ENCODE measurements at regions of chr3 and their contacts with region 1.

Region 1: DNA sequence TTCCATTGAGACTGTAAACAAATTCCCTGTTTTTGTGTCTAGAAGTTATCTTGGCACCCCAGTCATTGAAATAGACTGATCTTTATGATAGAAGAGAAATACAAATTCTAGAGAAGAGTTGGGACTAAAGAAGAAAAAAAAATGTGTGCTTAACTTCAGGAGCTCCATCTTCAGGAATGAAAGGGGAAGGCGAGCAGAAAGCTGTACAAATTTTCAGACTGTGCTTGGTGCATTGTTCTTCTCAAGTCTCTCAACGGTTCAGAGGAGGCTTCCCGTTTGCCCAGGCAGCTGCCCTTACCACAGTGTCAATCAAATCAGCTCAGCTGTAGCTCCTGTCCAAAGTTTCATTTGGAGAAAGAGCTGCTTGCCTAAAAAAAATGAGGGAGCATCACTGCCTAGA is 41.7 kb downstream of the OXSM start:
- DNase-seq: peak; percentile 29
- H3K4me3 Mint-ChIP-seq: no peak overlapping the region
- H3K27ac Mint-ChIP-seq: no peak overlapping the region
- H3K4me1 Mint-ChIP-seq: no peaks in the 10 kb centered on the region
- H3K27me3 Mint-ChIP-seq: no peaks in the 10 kb centered on the region
- CTCF ChIP-seq: no peak

Region 2: DNA sequence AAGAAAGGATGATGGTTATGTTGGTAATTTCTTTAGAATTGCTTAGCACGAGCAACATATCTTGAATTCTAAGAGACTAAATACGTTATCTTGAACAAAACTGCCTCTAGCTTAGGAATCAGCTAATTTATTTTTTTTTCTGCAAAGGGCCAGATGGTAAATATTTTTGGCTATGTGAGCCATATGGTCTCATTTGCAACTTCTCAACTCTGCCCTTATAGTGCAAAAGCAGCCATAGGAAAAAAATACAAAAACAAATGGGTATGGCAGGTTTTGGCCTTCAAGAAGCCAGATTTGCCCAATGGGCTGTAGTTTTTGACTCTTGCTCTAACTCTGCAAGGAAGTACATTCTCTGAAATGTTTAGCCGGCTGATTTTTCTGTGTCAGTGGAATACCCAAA is 29.8 kb before region 1 on chr3:
- CTCF ChIA-PET with region 1: no interaction called
- POLR2A ChIA-PET with region 1: no interaction called
- intact Hi-C with region 1: no loop called
- DNase-seq: no peak
- H3K4me3 Mint-ChIP-seq: no peak overlapping the region
- H3K27ac Mint-ChIP-seq: no peak overlapping the region
- H3K4me1 Mint-ChIP-seq: no peaks in the 10 kb centered on the region
- H3K27me3 Mint-ChIP-seq: no peaks in the 10 kb centered on the region
- CTCF ChIP-seq: no peak

Region 3: GRCh38 chr3:25817107-25817506 is 14.5 kb before region 1 on chr3:
- CTCF ChIA-PET with region 1: no interaction called
- POLR2A ChIA-PET with region 1: no interaction called
- intact Hi-C with region 1: no loop called
- DNase-seq: no peak
- H3K4me3 Mint-ChIP-seq: no peak overlapping the region
- H3K27ac Mint-ChIP-seq: no peak overlapping the region
- H3K4me1 Mint-ChIP-seq: no peaks in the 10 kb centered on the region
- H3K27me3 Mint-ChIP-seq: no peaks in the 10 kb centered on the region
- CTCF ChIP-seq: no peak

Region 4: GRCh38 chr3:25856902-25857518 is 25.4 kb after region 1 on chr3:
- CTCF ChIA-PET with region 1: interaction called, 15 read pairs
- POLR2A ChIA-PET with region 1: no interaction called
- intact Hi-C with region 1: no loop called
- DNase-seq: peak; percentile 49
- H3K4me3 Mint-ChIP-seq: no peak overlapping the region
- H3K27ac Mint-ChIP-seq: no peak overlapping the region
- H3K4me1 Mint-ChIP-seq: peaks cover 9% of the 10 kb centered on the region
- H3K27me3 Mint-ChIP-seq: no peaks in the 10 kb centered on the region
- CTCF ChIP-seq: peak; percentile 59

Measured in MCF 10A (cell line).